Endothelial cell of umbilical vein (primary cell): ENCODE measurements at regions of chr2 and their contacts with region 1.

Region 1: GRCh38 chr2:234425619-234426603 is 71.0 kb downstream of the ARL4C start:
- DNase-seq: no peak
- H3K4me3 ChIP-seq: no peak overlapping the region
- H3K27ac ChIP-seq: no peak overlapping the region
- H3K4me1 ChIP-seq: peaks cover 36% of the 10 kb centered on the region
- H3K27me3 ChIP-seq: no peaks in the 10 kb centered on the region
- CTCF ChIP-seq: no peak
- POLR2A ChIP-seq: no peak

Region 2: DNA sequence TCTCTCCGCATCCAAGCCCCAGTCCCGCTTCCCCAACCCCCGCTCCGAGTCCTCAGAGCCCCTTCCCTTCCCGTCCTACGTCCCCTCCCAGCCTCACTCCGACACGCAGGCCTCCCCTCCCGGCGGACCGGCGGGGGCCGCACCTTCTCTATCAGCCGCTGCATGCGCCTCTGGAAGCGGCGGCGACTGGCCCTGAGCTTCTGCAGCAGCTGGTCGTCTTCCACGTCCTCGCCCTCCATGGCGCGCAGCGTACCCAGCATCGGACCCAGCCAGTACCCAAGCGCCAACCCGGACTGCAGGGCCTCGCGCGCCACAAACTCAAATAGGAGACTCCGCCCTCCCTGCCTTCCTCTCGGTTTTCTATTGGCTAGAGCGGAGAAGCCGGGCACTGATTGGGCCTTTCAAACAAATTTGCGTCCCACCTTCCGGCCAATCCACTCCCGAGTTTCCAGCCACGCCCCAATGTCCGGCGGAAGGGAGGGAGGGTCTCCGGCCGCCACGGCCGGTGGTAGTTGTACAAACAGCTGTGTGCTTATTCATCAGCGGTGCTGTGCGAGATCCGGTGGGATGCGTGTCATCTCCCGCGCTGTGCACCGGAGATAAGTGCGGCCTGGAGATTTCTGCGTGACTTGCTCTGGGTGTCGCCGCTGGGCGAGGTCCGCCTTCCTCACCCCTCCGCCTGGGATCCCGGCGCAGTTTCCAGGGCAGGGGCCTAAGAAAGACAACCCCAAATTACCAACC is 571.5 kb before region 1 on chr2 and contains the start of gene HJURP:
- CTCF ChIA-PET with region 1: no interaction called
- POLR2A ChIA-PET with region 1: no interaction called
- dilution Hi-C with region 1: no loop called
- intact Hi-C with region 1: loop called (anchors 5 kb)
- DNase-seq: peak; percentile 98
- H3K4me3 ChIP-seq: peak within 1 kb of the TSS; percentile 88 to 98 (median 89)
- H3K27ac ChIP-seq: peak within 1 kb of the TSS; percentile 73
- H3K4me1 ChIP-seq: peaks cover 20% of the 10 kb centered on the region
- H3K27me3 ChIP-seq: no peaks in the 10 kb centered on the region
- CTCF ChIP-seq: no peak
- POLR2A ChIP-seq: peak; percentile 68
- total RNA-seq, gene HJURP: 42.4 and 60.9 TPM in 2 replicates

Region 3: GRCh38 chr2:233999182-233999581 is 426.7 kb before region 1 on chr2:
- CTCF ChIA-PET with region 1: no interaction called
- POLR2A ChIA-PET with region 1: no interaction called
- dilution Hi-C with region 1: no loop called
- intact Hi-C with region 1: no loop called
- DNase-seq: no peak
- H3K4me3 ChIP-seq: no peak overlapping the region
- H3K27ac ChIP-seq: no peak overlapping the region
- H3K4me1 ChIP-seq: no peaks in the 10 kb centered on the region
- H3K27me3 ChIP-seq: peaks cover 0 to 3% of the 10 kb centered on the region in 2 experiments
- CTCF ChIP-seq: no peak
- POLR2A ChIP-seq: no peak

Region 4: DNA sequence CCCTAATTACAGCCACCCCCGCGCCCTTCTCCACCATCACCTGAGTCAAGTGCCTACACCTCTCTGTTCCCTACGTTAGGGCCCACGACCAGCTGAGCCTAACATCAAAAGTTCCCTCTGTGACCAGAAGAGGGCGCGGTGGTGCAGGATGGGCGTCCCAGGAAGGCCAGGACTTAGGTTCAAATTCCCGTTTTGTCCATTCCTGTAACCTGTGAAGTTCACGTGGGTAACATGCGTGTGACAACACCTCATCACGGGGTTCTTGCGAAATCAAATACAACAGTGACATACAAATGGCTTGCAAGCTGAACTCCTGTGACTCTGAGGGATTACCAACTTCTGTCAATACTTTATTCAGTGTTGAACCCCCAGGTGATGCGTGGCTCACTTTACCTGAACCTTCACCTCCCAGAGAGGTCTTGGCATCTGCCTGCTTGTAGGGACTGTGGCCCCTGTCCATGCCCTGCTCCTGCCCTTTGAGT is 136.9 kb before region 1 on chr2:
- CTCF ChIA-PET with region 1: interaction called, 3 read pairs
- POLR2A ChIA-PET with region 1: no interaction called
- dilution Hi-C with region 1: no loop called
- intact Hi-C with region 1: loop called (anchors 1 kb)
- DNase-seq: peak; percentile 65
- H3K4me3 ChIP-seq: no peak overlapping the region
- H3K27ac ChIP-seq: no peak overlapping the region
- H3K4me1 ChIP-seq: peaks cover 37% of the 10 kb centered on the region
- H3K27me3 ChIP-seq: no peaks in the 10 kb centered on the region
- CTCF ChIP-seq: peak; percentile 75 to 88
- POLR2A ChIP-seq: no peak

Region 5: GRCh38 chr2:234437642-234438304 is 11.9 kb after region 1 on chr2:
- CTCF ChIA-PET with region 1: interaction called, 5 read pairs
- POLR2A ChIA-PET with region 1: no interaction called
- dilution Hi-C with region 1: no loop called
- intact Hi-C with region 1: loop called (anchors 1 kb)
- DNase-seq: no peak
- H3K4me3 ChIP-seq: no peak overlapping the region
- H3K27ac ChIP-seq: no peak overlapping the region
- H3K4me1 ChIP-seq: peaks cover 11% of the 10 kb centered on the region
- H3K27me3 ChIP-seq: no peaks in the 10 kb centered on the region
- CTCF ChIP-seq: no peak
- POLR2A ChIP-seq: no peak

Region 6: GRCh38 chr2:234500394-234501006 is 74.6 kb after region 1 on chr2:
- CTCF ChIA-PET with region 1: interaction called, 22 read pairs
- POLR2A ChIA-PET with region 1: interaction called, 3 read pairs
- dilution Hi-C with region 1: no loop called
- intact Hi-C with region 1: loop called (anchors 1 kb)
- DNase-seq: peak; percentile 61
- H3K4me3 ChIP-seq: no peak overlapping the region
- H3K27ac ChIP-seq: no peak overlapping the region
- H3K4me1 ChIP-seq: peaks cover 3% of the 10 kb centered on the region
- H3K27me3 ChIP-seq: peaks cover 0 to 2% of the 10 kb centered on the region in 2 experiments
- CTCF ChIP-seq: peak; percentile 51 to 58
- POLR2A ChIP-seq: no peak

Region 7: GRCh38 chr2:235050992-235051351 is 625.1 kb after region 1 on chr2:
- CTCF ChIA-PET with region 1: no interaction called
- POLR2A ChIA-PET with region 1: no interaction called
- dilution Hi-C with region 1: no loop called
- intact Hi-C with region 1: loop called (anchors 5 kb)
- DNase-seq: peak; percentile 88
- H3K4me3 ChIP-seq: no peak overlapping the region
- H3K27ac ChIP-seq: peak overlapping the region; percentile 69
- H3K4me1 ChIP-seq: peaks cover 28% of the 10 kb centered on the region
- H3K27me3 ChIP-seq: no peaks in the 10 kb centered on the region
- CTCF ChIP-seq: peak in 1 of 2 donors; percentile 10
- POLR2A ChIP-seq: no peak